PC-3 (cell line): ENCODE measurements at regions of chr11 and their contacts with region 1.

Region 1: DNA sequence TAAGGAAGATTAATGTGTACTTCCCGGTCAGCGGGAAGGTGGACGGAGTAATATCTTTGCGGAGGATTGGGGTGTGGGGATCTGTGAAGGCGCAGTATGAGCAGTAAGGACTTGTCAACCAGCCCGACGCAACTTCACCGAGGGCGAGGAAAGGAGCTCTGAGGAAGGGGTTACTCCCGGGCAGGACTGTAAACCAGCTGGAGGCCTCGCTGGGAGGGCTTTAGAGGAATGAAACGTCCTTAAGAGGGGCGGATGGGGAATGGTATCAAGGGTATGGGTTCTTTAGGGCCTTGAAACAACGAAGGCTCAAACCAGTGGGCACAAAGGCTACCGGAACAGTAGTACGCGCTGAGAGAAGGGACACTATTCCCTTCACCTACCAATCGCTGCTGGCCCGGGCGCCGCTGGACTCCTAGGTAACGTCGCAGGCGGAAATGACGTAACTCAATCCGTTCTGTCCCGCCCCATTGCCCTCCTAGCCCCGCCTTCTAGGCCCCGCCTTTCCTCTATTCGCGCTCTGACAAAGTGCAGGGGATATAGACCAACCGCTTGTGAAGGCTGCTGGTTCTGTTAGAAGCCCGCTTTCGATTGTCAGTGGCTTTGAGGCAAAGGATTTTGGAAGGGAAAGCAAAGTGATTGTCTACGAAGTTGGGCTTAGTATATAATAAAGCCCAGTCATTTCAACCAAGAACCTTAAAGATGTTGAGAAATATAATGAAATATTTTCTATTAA is at the start of gene C11orf65:
- DNase-seq: peak; percentile 99
- ATAC-seq: peak; percentile 98
- H3K4me3 ChIP-seq: peak within 1 kb of the TSS; percentile 74
- H3K27ac ChIP-seq: peak within 1 kb of the TSS; percentile 86
- H3K4me1 ChIP-seq: peaks cover 6% of the 10 kb centered on the region; the same call in 1 of the 2 replicates
- H3K27me3 ChIP-seq: no peaks in the 10 kb centered on the region
- CTCF ChIP-seq: no peak
- total RNA-seq, gene C11orf65: 0.62 and 2.7 TPM in 2 replicates

Region 2: DNA sequence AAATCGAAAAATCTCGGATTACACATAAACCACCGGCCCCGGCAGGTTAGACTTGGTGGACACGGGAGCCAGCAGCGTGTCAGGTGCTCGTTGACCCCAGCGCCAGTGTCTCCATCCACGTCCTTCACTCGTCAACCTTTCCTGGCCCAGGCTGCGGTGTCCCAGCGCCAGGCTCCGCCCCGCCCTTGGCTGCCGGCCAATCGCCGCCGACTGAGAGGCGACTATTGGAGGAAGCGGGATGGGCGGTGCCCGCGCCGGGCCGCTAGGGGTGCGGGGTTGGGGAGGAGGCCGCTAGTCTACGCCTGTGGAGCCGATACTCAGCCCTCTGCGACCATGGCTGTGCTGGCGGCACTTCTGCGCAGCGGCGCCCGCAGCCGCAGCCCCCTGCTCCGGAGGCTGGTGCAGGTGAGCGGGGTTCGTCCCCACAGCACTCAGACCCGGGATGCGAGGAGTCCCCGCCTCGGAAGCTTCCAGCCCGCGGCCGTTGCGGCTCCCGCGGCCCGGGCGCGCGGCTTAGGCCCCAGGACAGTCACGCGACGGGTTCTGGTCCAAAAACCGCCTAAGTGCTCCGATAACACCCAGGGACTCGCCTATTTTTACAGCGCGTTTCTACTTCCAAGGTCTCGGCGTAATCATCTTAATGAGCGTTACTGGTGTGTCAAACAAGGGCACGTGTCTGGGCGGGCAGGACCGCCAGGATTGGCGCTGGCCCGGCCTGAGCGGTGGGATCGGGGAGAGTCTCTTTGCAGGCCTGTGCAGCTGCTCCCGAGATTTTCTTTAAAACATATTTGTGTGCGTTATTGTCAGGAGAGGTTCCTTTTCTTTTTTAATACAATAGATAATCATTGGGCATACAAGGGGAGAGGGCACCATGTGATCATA is 345.7 kb before region 1 on chr11 and contains the start of gene ACAT1:
- CTCF ChIA-PET with region 1: no interaction called
- POLR2A ChIA-PET with region 1: no interaction called
- intact Hi-C with region 1: loop called (anchors 5 kb)
- DNase-seq: peak; percentile 98
- ATAC-seq: peak; percentile 96
- H3K4me3 ChIP-seq: peak within 1 kb of the TSS; percentile 74
- H3K27ac ChIP-seq: peak within 1 kb of the TSS; percentile 21
- H3K4me1 ChIP-seq: peaks cover 24% of the 10 kb centered on the region
- H3K27me3 ChIP-seq: no peaks in the 10 kb centered on the region
- CTCF ChIP-seq: no peak
- total RNA-seq, gene ACAT1: 180 and 212 TPM in 2 replicates

Region 3: DNA sequence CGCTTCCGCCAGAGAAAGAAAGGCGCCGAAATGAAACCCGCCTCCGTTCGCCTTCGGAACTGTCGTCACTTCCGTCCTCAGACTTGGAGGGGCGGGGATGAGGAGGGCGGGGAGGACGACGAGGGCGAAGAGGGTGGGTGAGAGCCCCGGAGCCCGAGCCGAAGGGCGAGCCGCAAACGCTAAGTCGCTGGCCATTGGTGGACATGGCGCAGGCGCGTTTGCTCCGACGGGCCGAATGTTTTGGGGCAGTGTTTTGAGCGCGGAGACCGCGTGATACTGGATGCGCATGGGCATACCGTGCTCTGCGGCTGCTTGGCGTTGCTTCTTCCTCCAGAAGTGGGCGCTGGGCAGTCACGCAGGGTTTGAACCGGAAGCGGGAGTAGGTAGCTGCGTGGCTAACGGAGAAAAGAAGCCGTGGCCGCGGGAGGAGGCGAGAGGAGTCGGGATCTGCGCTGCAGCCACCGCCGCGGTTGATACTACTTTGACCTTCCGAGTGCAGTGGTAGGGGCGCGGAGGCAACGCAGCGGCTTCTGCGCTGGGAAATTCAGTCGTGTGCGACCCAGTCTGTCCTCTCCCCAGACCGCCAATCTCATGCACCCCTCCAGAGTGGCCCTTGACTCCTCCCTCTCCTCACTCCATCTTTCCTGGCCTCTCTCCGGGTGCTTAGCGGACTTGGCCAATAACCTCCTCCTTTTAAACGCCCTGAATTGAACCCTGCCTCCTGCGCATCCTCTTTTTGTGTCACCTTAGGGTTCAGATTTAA is 244.4 kb before region 1 on chr11 and contains the start of gene ATM:
- CTCF ChIA-PET with region 1: interaction called, 4 read pairs
- POLR2A ChIA-PET with region 1: no interaction called
- intact Hi-C with region 1: loop called (anchors 1 kb)
- DNase-seq: peak; percentile 100
- ATAC-seq: peak; percentile 88
- H3K4me3 ChIP-seq: peak within 1 kb of the TSS; percentile 83
- H3K27ac ChIP-seq: peak within 1 kb of the TSS; percentile 77
- H3K4me1 ChIP-seq: peaks cover 47% of the 10 kb centered on the region
- H3K27me3 ChIP-seq: no peaks in the 10 kb centered on the region
- CTCF ChIP-seq: peak; percentile 86
- total RNA-seq, gene ATM: 40.2 and 55.3 TPM in 2 replicates

Region 4: DNA sequence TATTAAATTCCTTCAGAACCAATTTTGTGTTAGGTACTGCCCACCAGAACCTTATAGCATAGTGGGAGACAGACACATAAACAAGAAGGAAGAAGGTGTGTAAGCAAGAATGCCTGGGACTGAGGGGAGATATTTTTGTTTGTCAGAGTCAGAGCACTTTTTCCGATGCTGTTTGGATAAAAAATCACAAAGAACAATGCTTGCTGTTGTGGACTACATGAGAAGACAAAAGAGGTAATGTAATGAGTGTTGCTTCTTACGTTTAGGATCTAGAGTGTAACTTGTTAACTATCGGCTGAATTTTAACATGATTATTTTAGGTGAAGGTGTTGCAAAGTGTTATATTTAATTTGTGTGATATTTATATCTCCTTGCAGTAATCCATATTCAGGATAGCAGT is 159.5 kb before region 1 on chr11:
- CTCF ChIA-PET with region 1: no interaction called
- POLR2A ChIA-PET with region 1: no interaction called
- intact Hi-C with region 1: no loop called
- DNase-seq: no peak
- ATAC-seq: no peak
- H3K4me3 ChIP-seq: no peak overlapping the region
- H3K27ac ChIP-seq: no peak overlapping the region
- H3K4me1 ChIP-seq: no peaks in the 10 kb centered on the region
- H3K27me3 ChIP-seq: no peaks in the 10 kb centered on the region
- CTCF ChIP-seq: no peak

Region 5: GRCh38 chr11:108340970-108341369 is 126.3 kb before region 1 on chr11:
- CTCF ChIA-PET with region 1: no interaction called
- POLR2A ChIA-PET with region 1: no interaction called
- intact Hi-C with region 1: loop called (anchors 10 kb)
- DNase-seq: peak; percentile 95
- ATAC-seq: peak; percentile 95
- H3K4me3 ChIP-seq: no peak overlapping the region
- H3K27ac ChIP-seq: peak overlapping the region; percentile 34
- H3K4me1 ChIP-seq: peaks cover 39% of the 10 kb centered on the region
- H3K27me3 ChIP-seq: no peaks in the 10 kb centered on the region
- CTCF ChIP-seq: no peak

Region 6: GRCh38 chr11:108497317-108498045 is 30.2 kb after region 1 on chr11:
- CTCF ChIA-PET with region 1: no interaction called
- POLR2A ChIA-PET with region 1: no interaction called
- intact Hi-C with region 1: loop called (anchors 1 kb)
- DNase-seq: peak; percentile 99
- ATAC-seq: peak; percentile 92
- H3K4me3 ChIP-seq: peak overlapping the region; percentile 68
- H3K27ac ChIP-seq: peak overlapping the region; percentile 87
- H3K4me1 ChIP-seq: peaks cover 29% of the 10 kb centered on the region
- H3K27me3 ChIP-seq: no peaks in the 10 kb centered on the region
- CTCF ChIP-seq: no peak